ENCODE measurements at regions of chr7 and their contacts with region 1.

Region 1: DNA sequence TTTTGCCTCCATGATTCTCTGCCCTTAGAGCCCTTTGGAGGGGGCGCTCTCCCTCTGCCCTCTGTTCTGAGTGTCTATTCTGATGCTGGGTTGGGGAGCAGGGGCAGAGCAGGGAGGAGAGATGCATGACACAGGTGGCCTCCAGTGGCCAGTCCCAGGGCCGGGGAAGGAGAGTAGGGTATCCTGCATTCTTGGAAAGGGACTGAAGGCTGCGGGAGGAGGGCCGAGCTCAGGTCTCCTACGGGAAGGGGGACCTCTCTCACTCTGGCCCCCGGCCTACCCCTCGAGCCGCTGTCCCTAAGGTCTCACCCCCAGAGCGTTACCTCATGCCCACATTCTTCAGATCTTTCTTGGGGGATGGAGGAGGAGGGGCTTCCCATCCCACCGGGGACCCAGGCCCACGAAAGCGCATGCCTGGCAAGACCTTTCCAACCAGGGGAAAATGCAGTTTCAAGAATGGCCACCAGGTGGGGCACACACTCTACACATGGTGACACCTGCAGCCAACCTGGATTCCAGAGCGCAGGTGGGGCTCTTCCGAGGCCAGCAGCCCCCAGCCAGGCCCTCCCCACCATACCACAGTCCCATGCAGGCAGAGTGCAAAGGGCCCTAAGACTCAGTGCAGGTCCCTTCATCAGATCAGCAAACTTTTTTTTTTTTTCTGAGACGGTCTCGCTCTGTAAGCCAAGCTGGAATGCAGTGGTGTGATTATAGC is 86.4 kb downstream of the MYL10 start:
- DNase-seq: peak; percentile 34
- H3K4me3 ChIP-seq: no peak overlapping the region
- H3K27ac ChIP-seq: no peak overlapping the region
- H3K4me1 ChIP-seq: no peaks in the 10 kb centered on the region
- H3K27me3 ChIP-seq: no peaks in the 10 kb centered on the region
- CTCF ChIP-seq: peak; percentile 76 to 89

Region 2: DNA sequence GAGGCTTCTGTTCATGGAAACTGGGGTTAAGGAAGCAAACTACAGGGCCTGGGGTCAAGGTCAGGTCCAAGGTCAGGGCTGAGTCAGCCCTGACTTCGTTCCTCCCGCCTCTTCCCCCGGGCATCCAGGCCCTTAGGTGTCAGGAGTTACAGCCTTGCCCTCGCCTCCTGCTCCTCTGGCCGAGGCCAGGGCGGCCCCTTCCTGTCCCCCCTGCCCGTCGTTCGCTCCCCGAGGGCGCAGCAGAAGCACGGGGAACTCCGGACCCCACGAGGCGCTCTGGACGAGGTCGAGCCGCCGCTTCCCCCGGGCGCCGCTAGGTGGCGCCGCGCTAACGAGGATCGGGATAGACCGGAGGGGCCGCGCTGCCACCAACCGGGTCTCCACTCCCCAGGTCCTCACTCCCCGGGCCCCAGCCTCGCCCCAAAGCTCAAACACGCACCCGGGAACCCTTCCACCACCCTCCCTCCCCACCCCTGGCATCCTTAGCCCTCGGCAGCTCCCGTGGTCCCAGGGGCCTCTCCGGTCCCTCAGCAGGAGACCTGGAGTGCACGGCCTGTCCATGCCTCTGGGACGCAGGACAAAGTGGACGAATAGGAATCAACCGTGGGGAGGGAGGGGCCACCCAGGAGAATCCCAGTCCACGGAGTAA is 145.6 kb after region 1 on chr7:
- CTCF ChIA-PET with region 1: no interaction called
- dilution Hi-C with region 1: no loop called
- in situ Hi-C with region 1: no loop called
- intact Hi-C with region 1: loop called (anchors 5 kb)
- DNase-seq: peak; percentile 34
- H3K4me3 ChIP-seq: peak overlapping the region in 2 of 3 experiments; percentile 34 to 35
- H3K27ac ChIP-seq: no peak overlapping the region
- H3K4me1 ChIP-seq: peaks cover 6% of the 10 kb centered on the region
- H3K27me3 ChIP-seq: no peaks in the 10 kb centered on the region
- CTCF ChIP-seq: peak; percentile 53 to 92

Region 3: DNA sequence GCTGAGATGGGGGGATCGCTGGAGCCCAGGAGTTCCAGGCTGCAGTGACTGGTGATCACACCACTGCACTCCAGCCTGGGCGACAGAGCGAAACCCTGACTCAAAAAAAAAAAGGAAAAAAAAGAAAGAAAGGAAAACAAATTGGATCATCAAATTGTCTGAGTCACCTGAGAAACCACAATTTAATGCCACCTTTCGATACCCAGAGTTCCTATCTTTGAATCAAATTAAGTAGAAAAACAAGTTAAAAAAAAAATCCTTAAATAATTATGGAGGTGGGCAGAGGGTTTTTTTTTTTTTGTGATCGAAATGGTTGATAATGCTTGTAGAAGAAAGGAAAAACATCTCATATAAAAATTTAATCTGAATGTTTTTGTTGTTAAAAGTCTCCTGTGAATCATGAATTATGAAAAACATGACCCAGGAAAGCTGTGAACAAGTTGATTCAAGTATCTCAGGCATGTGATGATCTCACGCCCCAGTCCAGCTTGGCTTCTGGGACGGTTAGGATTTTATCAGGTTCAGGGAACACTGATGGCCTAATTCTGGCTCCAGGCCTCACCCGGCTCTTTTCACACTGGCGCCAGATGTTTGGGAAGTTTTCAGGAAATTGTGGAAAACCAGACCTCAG is 249.5 kb after region 1 on chr7:
- CTCF ChIA-PET with region 1: no interaction called
- dilution Hi-C with region 1: no loop called
- in situ Hi-C with region 1: no loop called
- intact Hi-C with region 1: no loop called
- DNase-seq: peak; percentile 93
- H3K4me3 ChIP-seq: peak overlapping the region in 1 of 3 experiments; percentile 41
- H3K27ac ChIP-seq: peak overlapping the region; percentile 97
- H3K4me1 ChIP-seq: peaks cover 6% of the 10 kb centered on the region
- H3K27me3 ChIP-seq: no peaks in the 10 kb centered on the region
- CTCF ChIP-seq: no peak

Region 4: DNA sequence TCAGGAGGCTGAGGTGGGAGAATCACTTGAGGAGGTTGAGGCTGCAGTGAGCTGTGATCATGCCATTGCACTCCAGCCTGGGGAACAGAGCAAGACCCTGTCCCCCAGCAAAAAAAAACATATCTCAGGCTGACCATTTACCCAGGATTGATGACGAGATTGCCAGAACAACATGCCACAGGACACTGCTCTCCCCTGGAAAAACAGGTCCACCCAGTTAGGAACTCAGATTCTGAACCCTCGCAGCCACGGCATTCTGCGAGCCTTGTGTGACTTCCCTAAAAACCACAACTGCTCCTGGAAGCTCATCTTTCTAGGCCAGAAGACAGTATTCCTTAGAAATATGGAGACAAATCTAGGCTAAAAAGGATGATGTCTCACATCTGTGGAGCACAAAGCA is 701.9 kb after region 1 on chr7:
- CTCF ChIA-PET with region 1: no interaction called
- dilution Hi-C with region 1: loop called (anchors 5 kb)
- in situ Hi-C with region 1: no loop called
- intact Hi-C with region 1: no loop called
- DNase-seq: no peak
- H3K4me3 ChIP-seq: no peak overlapping the region
- H3K27ac ChIP-seq: no peak overlapping the region
- H3K4me1 ChIP-seq: no peaks in the 10 kb centered on the region
- H3K27me3 ChIP-seq: no peaks in the 10 kb centered on the region
- CTCF ChIP-seq: no peak

Region 5: GRCh38 chr7:102279537-102280400 is 737.1 kb after region 1 on chr7:
- CTCF ChIA-PET with region 1: no interaction called
- dilution Hi-C with region 1: no loop called
- in situ Hi-C with region 1: loop called in 1 of 2 experiments (anchors 10 kb)
- intact Hi-C with region 1: no loop called
- DNase-seq: peak; percentile 15
- H3K4me3 ChIP-seq: no peak overlapping the region
- H3K27ac ChIP-seq: no peak overlapping the region
- H3K4me1 ChIP-seq: no peaks in the 10 kb centered on the region
- H3K27me3 ChIP-seq: no peaks in the 10 kb centered on the region
- CTCF ChIP-seq: peak; percentile 57 to 91

Measured in mammary epithelial cell (primary cell).